SK-N-SH (cell line): ENCODE measurements at regions of chr11 and their contacts with region 1.

Region 1: DNA sequence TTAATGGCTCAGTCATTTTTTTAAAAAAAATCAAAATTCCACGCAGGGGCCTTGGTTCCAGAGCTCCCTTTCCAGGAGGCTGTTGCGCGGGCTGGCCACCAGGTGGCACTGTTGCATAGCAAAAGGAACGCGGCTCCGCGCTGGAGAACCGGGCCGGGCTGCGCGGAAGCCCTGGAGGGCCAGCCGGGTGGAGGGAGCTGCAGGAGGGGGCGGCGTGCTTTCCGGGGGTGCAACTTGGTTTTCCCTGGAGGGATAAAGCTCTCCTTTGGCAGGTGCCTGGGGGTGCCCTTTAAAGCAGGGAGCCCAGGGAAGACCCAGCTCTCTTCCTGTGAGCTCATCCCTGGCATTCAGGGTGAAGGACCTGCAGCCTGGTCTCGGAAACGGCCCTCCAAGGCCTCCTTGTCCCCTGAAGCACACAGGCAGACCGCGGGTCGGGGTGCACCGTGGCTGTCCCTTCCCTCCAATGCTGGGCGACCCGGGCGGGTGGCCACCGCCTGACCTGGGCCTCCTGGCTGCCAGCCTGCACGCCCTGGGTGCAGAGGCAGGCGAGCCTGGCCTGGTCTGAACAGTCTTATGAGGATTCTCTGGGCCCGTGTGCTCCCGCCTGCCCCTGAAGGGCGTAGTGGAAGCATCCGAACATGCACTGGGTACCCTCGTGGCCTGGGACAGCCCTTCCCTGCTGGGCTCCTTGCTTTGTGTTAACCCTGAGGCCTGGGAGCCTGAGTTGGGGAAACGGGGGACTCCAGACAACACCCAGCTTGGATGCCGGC is 23.4 kb downstream of the KRTAP5-5 start:
- DNase-seq: peak; percentile 96
- H3K4me3 ChIP-seq: peak overlapping the region in 1 of 2 experiments; percentile 25; a peak in 2 of 4 replicates
- H3K27ac ChIP-seq: no peak overlapping the region
- H3K4me1 ChIP-seq: peaks cover 0 to 27% of the 10 kb centered on the region in 2 experiments; a peak in 1 of 4 replicates
- H3K27me3 ChIP-seq: no peaks in the 10 kb centered on the region
- CTCF ChIP-seq: peak; percentile 95
- EP300 ChIP-seq: no peak
- RAD21 ChIP-seq: peak; percentile 93

Region 2: GRCh38 chr11:1669661-1670218 is 16.8 kb after region 1 on chr11:
- CTCF ChIA-PET with region 1: interaction called, 101 read pairs
- POLR2A ChIA-PET with region 1: no interaction called
- DNase-seq: peak; percentile 27
- H3K4me3 ChIP-seq: no peak overlapping the region
- H3K27ac ChIP-seq: no peak overlapping the region
- H3K4me1 ChIP-seq: no peaks in the 10 kb centered on the region; a peak in 1 of 4 replicates
- H3K27me3 ChIP-seq: no peaks in the 10 kb centered on the region; the same call in 1 of the 2 replicates
- CTCF ChIP-seq: no peak
- EP300 ChIP-seq: no peak
- RAD21 ChIP-seq: no peak

Region 3: GRCh38 chr11:1807264-1807995 is 154.5 kb after region 1 on chr11:
- CTCF ChIA-PET with region 1: interaction called, 13 read pairs
- POLR2A ChIA-PET with region 1: no interaction called
- DNase-seq: no peak
- H3K4me3 ChIP-seq: no peak overlapping the region
- H3K27ac ChIP-seq: no peak overlapping the region
- H3K4me1 ChIP-seq: no peaks in the 10 kb centered on the region
- H3K27me3 ChIP-seq: no peaks in the 10 kb centered on the region; the same call in 1 of the 2 replicates
- CTCF ChIP-seq: no peak; the same call in 1 of the 2 replicates
- EP300 ChIP-seq: no peak
- RAD21 ChIP-seq: no peak

Region 4: DNA sequence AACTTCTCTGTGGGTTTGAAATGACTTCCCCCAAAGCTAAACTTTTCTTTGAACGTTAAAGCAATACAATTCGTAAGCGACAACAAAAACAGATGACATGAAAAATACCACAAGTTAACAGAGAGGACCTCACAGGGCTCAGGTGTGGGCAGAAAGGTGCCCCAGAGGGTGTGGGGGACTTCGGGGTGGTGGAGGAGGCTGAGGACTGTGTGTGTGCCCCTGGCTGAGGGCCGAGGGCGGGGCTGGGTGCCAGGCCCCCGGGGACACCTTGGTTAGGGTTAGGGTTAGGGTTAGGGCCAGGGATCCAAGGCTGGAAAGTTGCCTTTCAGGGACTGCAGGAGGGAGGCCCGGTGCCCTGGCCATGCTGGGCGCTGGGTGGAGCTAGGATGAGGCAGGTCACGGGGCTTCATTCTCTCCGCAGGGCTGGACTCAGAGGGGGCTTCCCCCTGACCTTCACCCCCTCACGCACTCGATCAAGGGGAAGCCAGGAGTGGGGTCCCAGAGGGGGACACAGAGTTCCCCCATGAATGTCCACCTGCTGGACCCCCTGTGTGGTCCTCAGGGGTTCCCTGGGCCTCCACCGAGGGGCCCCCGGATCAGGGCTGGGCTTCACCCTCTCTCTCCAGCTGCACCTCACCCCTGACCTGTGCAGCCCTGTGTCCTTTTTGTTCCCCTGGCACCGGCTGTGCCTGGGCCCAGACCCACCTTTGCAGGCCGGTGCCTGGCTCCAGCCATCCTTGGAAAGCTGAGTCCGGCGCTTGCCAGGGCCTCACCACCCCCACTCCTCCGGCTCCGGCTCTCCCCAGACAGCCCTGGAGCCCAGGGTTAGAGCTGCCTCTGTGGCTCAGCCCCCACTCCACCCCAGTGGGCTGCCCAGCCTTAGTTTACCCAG is 192.9 kb after region 1 on chr11:
- CTCF ChIA-PET with region 1: interaction called, 25 read pairs
- POLR2A ChIA-PET with region 1: no interaction called
- DNase-seq: no peak
- H3K4me3 ChIP-seq: no peak overlapping the region
- H3K27ac ChIP-seq: no peak overlapping the region
- H3K4me1 ChIP-seq: peaks cover 0 to 2% of the 10 kb centered on the region in 2 experiments; a peak in 1 of 4 replicates
- H3K27me3 ChIP-seq: no peaks in the 10 kb centered on the region
- CTCF ChIP-seq: no peak
- EP300 ChIP-seq: no peak
- RAD21 ChIP-seq: no peak

Region 5: DNA sequence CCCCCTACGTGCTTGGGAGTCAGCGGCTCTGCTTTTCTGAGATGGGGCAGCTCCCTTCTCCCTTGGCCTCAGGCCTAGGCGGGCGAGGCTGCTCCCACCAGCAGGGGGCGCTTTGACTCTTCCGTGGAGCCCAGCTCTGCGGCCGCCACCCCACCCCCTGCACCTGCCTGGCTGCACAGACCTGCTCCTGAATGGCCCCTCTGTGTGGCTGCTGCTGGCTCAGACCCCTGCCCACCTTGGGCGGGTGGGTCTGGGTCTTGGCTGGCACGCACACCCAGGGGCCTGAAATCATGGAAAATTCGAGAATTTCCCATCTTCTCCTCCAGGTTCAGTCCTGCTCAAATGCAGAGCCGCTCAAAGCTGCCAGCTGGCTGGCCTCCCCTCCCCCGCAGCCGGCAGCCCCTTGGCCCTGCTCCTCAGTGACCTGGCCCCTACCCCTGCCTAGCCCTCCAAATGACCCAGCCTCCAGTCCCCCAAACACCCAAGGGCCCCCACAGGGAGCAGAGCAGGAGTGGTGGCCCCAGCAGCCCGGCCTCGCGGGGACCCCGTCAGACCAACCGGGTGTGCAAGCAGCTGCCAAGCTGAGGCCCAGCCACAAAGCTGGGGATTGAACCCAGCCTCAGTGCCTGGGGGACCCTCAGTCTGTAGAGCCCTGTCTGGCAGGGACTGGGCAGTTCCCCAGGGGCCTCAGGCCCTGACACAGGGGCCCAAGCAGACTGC is 229.7 kb after region 1 on chr11:
- CTCF ChIA-PET with region 1: interaction called, 25 read pairs
- POLR2A ChIA-PET with region 1: no interaction called
- DNase-seq: peak; percentile 97
- H3K4me3 ChIP-seq: no peak overlapping the region; a peak in 1 of 4 replicates
- H3K27ac ChIP-seq: peak overlapping the region in 1 of 2 experiments; percentile 72; a peak in 1 of 4 replicates
- H3K4me1 ChIP-seq: peaks cover 0 to 19% of the 10 kb centered on the region in 2 experiments; a peak in 1 of 4 replicates
- H3K27me3 ChIP-seq: no peaks in the 10 kb centered on the region
- CTCF ChIP-seq: peak; percentile 82
- EP300 ChIP-seq: no peak
- RAD21 ChIP-seq: peak; percentile 89

Region 6: GRCh38 chr11:2002807-2003206 is 349.9 kb after region 1 on chr11:
- CTCF ChIA-PET with region 1: interaction called, 52 read pairs
- POLR2A ChIA-PET with region 1: interaction called, 5 read pairs
- DNase-seq: no peak
- H3K4me3 ChIP-seq: no peak overlapping the region
- H3K27ac ChIP-seq: no peak overlapping the region
- H3K4me1 ChIP-seq: no peaks in the 10 kb centered on the region
- H3K27me3 ChIP-seq: no peaks in the 10 kb centered on the region
- CTCF ChIP-seq: no peak
- EP300 ChIP-seq: no peak
- RAD21 ChIP-seq: no peak